ENCODE measurements at regions of chr2 and their contacts with region 1.

Region 1: GRCh38 chr2:218186355-218186766 is 19.6 kb upstream of the CXCR1 start:
- DNase-seq: peak; percentile 85

Region 2: GRCh38 chr2:218238887-218239286 is 52.5 kb after region 1 on chr2:
- intact Hi-C with region 1: no loop called
- DNase-seq: no peak

Region 3: DNA sequence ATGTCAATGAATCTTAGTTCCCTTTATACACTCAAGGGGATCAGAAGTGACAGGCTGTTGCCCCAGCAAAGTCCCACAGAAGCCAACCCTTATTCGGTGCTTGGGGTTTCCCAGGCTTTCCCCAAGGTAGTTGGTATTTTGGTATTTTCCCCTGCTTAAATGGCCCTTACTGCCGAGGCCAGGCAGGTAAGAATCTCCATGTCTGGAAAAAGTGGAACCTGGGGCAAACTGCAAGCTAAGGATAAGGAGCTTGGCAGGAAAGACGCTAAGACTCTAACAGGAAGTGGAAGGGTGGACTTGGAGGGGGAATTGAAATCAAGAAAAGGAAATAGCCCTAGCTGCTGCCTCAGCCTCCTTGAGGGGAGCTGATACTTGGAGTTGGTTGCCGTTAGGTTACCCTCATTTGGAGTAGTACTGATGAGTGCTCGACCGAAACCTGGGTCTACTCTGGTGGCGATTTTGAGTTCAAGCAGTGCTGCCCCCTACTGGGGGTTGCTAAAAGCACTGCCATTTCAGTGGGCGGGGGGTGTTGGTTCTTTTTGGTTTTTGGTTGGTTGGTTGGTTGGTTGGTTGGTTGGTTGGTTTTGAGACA is 71.1 kb after region 1 on chr2:
- intact Hi-C with region 1: loop called (anchors 5 kb)
- DNase-seq: no peak

Region 4: DNA sequence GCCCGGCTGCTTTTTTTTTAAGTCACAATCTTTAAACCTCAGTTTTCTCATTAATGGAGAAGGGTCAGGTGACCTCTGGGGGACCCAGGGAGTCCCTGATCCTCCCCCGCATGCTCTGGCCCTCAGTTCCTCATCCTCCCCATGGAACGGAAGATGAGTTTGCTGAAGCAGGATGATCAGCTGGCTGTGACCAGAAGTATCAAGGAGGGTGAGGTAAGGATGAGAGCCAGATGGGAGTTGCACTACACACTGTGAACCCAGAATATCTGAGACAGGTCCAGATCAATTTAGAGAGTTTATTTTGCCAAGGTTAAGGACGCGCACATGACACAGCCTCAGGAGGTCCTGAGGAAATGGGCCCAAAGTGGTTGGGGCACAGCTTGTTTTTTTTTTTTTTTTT is 174.1 kb after region 1 on chr2:
- intact Hi-C with region 1: loop called (anchors 2 kb)
- DNase-seq: no peak

Region 5: GRCh38 chr2:218466016-218466521 is 279.7 kb after region 1 on chr2:
- intact Hi-C with region 1: loop called (anchors 5 kb)
- DNase-seq: no peak

Measured in cardiac septum (tissue), 1 donor.